B cell (primary cell): ENCODE measurements at regions of chr2 and their contacts with region 1.

Region 1: DNA sequence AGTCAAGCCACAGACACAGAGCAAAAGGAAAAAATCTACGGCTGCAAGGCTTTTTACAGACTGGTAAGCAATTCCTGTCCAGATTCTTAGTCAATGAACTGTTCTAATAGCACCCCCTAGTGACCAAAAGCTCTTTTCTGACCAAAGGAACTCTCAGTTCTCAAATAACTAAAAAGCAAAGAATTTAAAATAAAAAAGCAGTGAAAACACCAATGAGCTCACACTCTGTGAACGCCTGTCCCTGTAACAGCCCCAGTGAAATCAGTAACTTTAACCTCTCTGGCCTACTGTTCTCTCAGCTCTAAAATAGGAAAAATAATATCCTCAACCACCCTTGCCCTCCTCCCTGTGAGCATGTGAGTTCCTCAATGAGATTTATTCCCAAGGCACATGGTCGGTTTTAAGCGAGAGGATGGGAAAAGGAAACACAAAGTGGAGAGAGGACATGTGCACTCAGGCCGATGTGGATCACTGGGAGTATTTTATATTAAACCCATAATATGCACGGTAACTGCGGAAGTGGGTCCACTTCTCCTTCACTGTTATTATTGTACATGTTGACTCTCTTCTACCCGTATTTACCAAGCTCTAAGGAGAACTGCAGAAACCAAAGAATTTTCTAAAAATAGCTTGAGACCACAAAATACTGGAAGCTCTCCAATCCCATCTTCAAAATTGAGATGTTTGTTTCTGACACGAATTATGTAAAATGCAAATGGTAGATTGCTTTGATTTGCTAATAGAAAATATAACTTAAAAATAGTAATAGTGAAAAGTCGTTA is 128.5 kb downstream of the STK39 start:
- DNase-seq: peak; percentile 73
- ATAC-seq: peak; percentile 61
- H3K4me3 ChIP-seq: no peak overlapping the region
- H3K4me3 Mint-ChIP-seq: no peak overlapping the region
- H3K27ac ChIP-seq: no peak overlapping the region
- H3K27ac Mint-ChIP-seq: no peak overlapping the region
- H3K4me1 ChIP-seq: peaks cover 4 to 8% of the 10 kb centered on the region in 2 donors
- H3K4me1 Mint-ChIP-seq: no peaks in the 10 kb centered on the region
- H3K27me3 ChIP-seq: no peaks in the 10 kb centered on the region
- H3K27me3 Mint-ChIP-seq: no peaks in the 10 kb centered on the region
- CTCF ChIP-seq: peak; percentile 75

Region 2: GRCh38 chr2:166539340-166540162 is 1579.4 kb before region 1 on chr2:
- CTCF ChIA-PET with region 1: interaction called, 83 read pairs
- POLR2A ChIA-PET with region 1: no interaction called
- intact Hi-C with region 1: no loop called
- DNase-seq: peak; percentile 58
- ATAC-seq: peak; percentile 70
- H3K4me3 ChIP-seq: no peak overlapping the region
- H3K4me3 Mint-ChIP-seq: no peak overlapping the region
- H3K27ac ChIP-seq: no peak overlapping the region
- H3K27ac Mint-ChIP-seq: no peak overlapping the region
- H3K4me1 ChIP-seq: peaks cover 0 to 3% of the 10 kb centered on the region in 2 donors
- H3K4me1 Mint-ChIP-seq: peaks cover 1% of the 10 kb centered on the region
- H3K27me3 ChIP-seq: no peaks in the 10 kb centered on the region
- H3K27me3 Mint-ChIP-seq: peaks cover 5% of the 10 kb centered on the region
- CTCF ChIP-seq: peak; percentile 88

Region 3: DNA sequence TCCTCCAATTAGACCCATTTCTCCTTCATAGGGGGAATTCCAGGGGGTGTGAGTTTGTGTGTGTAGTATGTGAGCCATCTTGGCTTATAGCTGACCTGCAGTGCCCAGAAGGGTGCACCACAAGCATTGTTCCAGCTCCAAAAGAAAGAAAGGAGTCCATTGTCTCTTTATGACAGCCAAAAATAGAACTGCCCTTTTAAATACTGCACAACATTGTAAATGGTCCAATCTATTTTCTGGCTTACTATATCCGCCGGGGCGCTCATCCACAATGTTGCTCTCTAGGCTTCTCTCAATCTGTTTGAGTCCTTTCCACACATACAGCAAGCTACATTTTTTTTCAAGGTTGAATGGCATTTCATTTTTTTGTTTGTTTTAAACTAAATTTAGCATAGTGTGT is 389.0 kb before region 1 on chr2:
- CTCF ChIA-PET with region 1: no interaction called
- POLR2A ChIA-PET with region 1: no interaction called
- intact Hi-C with region 1: loop called (anchors 10 kb)
- DNase-seq: no peak
- ATAC-seq: no peak
- H3K4me3 ChIP-seq: no peak overlapping the region
- H3K4me3 Mint-ChIP-seq: no peak overlapping the region
- H3K27ac ChIP-seq: no peak overlapping the region
- H3K27ac Mint-ChIP-seq: no peak overlapping the region
- H3K4me1 ChIP-seq: no peaks in the 10 kb centered on the region
- H3K4me1 Mint-ChIP-seq: no peaks in the 10 kb centered on the region
- H3K27me3 ChIP-seq: no peaks in the 10 kb centered on the region
- H3K27me3 Mint-ChIP-seq: peaks cover 2% of the 10 kb centered on the region
- CTCF ChIP-seq: no peak

Region 4: DNA sequence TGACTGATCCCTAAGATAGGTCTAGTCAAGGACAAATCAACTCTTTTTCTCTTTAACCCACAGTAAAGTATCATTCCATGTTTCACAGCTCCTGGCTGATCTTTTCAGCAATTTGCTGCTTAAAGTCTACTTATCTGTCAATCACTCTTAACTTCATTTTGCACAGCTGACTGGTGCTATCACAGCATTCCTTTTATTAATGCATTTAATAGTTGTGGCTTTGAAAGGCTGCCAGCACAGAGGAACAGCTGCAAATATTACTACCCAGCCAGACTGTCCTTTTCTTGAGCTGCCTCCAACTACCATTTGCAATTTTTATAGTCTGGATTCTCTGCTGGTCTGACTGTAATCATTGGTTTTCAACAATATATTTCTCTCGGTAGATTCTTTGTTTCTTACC is 175.0 kb before region 1 on chr2:
- CTCF ChIA-PET with region 1: interaction called, 10 read pairs
- POLR2A ChIA-PET with region 1: no interaction called
- intact Hi-C with region 1: no loop called
- DNase-seq: no peak
- ATAC-seq: no peak
- H3K4me3 ChIP-seq: no peak overlapping the region
- H3K4me3 Mint-ChIP-seq: no peak overlapping the region
- H3K27ac ChIP-seq: no peak overlapping the region
- H3K27ac Mint-ChIP-seq: no peak overlapping the region
- H3K4me1 ChIP-seq: no peaks in the 10 kb centered on the region
- H3K4me1 Mint-ChIP-seq: no peaks in the 10 kb centered on the region
- H3K27me3 ChIP-seq: no peaks in the 10 kb centered on the region
- H3K27me3 Mint-ChIP-seq: peaks cover under 1% of the 10 kb centered on the region
- CTCF ChIP-seq: no peak

Region 5: GRCh38 chr2:168015274-168015953 is 103.5 kb before region 1 on chr2:
- CTCF ChIA-PET with region 1: interaction called, 13 read pairs
- POLR2A ChIA-PET with region 1: no interaction called
- intact Hi-C with region 1: no loop called
- DNase-seq: no peak
- ATAC-seq: no peak
- H3K4me3 ChIP-seq: no peak overlapping the region
- H3K4me3 Mint-ChIP-seq: no peak overlapping the region
- H3K27ac ChIP-seq: no peak overlapping the region
- H3K27ac Mint-ChIP-seq: no peak overlapping the region
- H3K4me1 ChIP-seq: no peaks in the 10 kb centered on the region
- H3K4me1 Mint-ChIP-seq: peaks cover 4% of the 10 kb centered on the region
- H3K27me3 ChIP-seq: no peaks in the 10 kb centered on the region
- H3K27me3 Mint-ChIP-seq: no peaks in the 10 kb centered on the region
- CTCF ChIP-seq: no peak

Region 6: DNA sequence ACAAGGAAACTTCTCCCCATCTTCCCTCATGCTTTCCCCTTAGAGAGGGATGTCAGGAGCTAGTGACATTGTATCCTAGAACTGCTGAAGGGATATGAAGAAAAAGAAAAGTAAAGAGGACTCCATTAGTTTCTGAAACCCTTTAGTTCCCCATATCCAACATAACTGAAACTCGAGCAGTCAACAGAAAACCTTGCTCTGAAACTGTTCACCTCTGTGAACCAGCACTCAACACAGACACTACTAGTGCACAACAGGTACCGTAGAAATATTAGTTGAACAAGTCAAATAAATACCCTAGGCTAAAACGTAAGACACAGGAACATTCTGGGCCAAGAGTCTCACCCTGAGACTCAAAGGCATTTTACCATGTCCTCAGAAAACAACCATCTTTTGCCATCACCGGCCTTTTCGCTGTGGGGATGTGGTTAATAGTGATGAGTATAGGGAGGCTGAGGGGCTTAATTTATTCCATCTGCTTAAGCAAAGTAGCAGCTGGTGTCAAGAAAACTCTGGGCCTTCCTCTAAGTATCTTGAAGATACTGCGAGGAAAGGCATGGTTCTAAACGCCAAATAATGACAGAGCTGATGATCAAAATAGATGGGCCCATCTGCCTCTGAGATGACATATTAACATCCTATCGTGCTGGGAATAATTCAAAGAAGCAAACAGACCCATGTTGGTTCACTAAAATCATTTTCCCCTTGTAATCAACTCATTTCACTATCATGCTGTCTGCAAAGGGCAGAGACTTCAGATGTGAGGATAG is 28.4 kb before region 1 on chr2:
- CTCF ChIA-PET with region 1: interaction called, 15 read pairs
- POLR2A ChIA-PET with region 1: no interaction called
- intact Hi-C with region 1: no loop called
- DNase-seq: peak; percentile 23
- ATAC-seq: peak; percentile 33
- H3K4me3 ChIP-seq: no peak overlapping the region
- H3K4me3 Mint-ChIP-seq: peak overlapping the region; percentile 52
- H3K27ac ChIP-seq: peak overlapping the region in 1 of 2 donors; percentile 60
- H3K27ac Mint-ChIP-seq: peak overlapping the region; percentile 82
- H3K4me1 ChIP-seq: peaks cover 20 to 26% of the 10 kb centered on the region in 2 donors
- H3K4me1 Mint-ChIP-seq: peaks cover 27% of the 10 kb centered on the region
- H3K27me3 ChIP-seq: no peaks in the 10 kb centered on the region
- H3K27me3 Mint-ChIP-seq: no peaks in the 10 kb centered on the region
- CTCF ChIP-seq: no peak

Region 7: DNA sequence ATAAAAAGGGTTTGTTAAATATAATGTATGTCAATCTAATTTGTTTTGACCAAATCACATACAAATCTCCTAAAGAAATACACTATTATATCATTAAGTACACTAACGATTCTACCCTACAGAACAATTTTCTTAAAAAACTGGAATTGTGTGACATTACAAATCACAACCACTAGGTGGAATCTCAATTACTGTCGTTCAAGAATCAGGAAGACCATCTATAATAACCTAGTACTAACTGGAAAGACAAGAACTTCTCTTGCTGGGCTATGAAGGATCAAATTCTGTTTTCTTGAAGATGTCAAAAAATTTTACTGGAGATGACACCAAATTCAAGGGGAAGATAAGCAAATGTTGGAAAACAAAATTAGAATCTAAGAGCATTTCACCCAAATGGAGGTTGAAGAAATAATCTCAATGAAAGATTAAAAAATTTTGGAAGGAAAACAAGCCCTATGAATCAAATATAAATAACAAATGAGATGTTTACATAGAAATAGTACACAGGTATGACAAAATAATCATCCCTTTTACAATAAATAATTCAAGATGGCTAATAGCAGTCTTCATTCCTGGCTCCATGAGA is 17.6 kb after region 1 on chr2:
- CTCF ChIA-PET with region 1: interaction called, 59 read pairs
- POLR2A ChIA-PET with region 1: no interaction called
- intact Hi-C with region 1: no loop called
- DNase-seq: peak; percentile 46
- ATAC-seq: no peak
- H3K4me3 ChIP-seq: no peak overlapping the region
- H3K4me3 Mint-ChIP-seq: no peak overlapping the region
- H3K27ac ChIP-seq: no peak overlapping the region
- H3K27ac Mint-ChIP-seq: no peak overlapping the region
- H3K4me1 ChIP-seq: peaks cover 0 to 5% of the 10 kb centered on the region in 2 donors
- H3K4me1 Mint-ChIP-seq: peaks cover 21% of the 10 kb centered on the region
- H3K27me3 ChIP-seq: no peaks in the 10 kb centered on the region
- H3K27me3 Mint-ChIP-seq: no peaks in the 10 kb centered on the region
- CTCF ChIP-seq: peak; percentile 73